ENCODE measurements at regions of chr3 and their contacts with region 1.

Region 1: GRCh38 chr3:79618883-79619282 is 148.9 kb downstream of the ROBO1 start:
- DNase-seq: peak; percentile 39 to 70
- H3K4me3 ChIP-seq: no peak overlapping the region
- H3K27ac ChIP-seq: peak overlapping the region; percentile 76
- H3K4me1 ChIP-seq: 0 out of 2 replicates have a peak, but pooled peaks cover 5% of the 10 kb centered on the region
- H3K27me3 ChIP-seq: no peaks in the 10 kb centered on the region
- CTCF ChIP-seq: no peak

Region 2: DNA sequence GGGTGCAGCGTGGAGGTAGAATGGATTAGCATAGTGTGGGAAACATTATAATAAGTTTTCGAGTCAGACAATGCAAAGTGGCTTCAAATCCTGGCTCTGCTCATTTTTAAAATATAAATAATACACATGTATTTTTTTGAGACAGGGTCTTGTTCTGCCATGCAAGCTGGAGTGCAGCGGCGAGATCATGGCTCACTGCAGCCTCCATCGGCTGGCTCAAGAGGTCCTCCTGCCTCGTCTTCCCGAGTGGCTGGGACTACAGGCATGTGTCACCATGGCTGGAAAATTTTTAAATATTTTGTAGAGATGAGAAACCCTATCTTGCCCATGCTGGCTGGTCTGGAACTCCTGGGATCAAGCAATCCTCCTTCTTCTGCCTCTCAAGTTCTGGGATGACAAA is 46.0 kb before region 1 on chr3:
- CTCF ChIA-PET with region 1: no interaction called
- POLR2A ChIA-PET with region 1: no interaction called
- intact Hi-C with region 1: no loop called
- DNase-seq: no peak
- H3K4me3 ChIP-seq: no peak overlapping the region
- H3K27ac ChIP-seq: no peak overlapping the region
- H3K4me1 ChIP-seq: no peaks in the 10 kb centered on the region
- H3K27me3 ChIP-seq: no peaks in the 10 kb centered on the region
- CTCF ChIP-seq: no peak

Region 3: DNA sequence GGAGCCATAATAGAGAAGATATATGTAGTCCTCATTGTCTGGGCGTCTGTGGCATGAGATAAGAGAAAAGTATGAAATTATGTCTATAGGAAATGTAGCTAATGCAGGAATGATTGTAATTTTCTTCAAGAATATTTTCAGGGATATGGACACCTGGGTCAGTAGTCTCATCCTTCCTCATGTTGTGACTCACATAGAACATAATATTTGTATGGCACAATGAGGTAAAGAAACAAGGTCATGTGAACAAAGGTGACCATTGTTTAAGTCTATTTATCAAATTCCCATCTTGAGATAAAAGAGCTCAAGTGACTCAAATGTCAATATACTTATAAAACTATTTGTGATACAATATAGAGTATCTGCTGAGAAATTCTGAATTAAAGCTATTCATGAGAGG is 494.4 kb after region 1 on chr3:
- CTCF ChIA-PET with region 1: interaction called, 18 read pairs
- POLR2A ChIA-PET with region 1: no interaction called
- intact Hi-C with region 1: no loop called
- DNase-seq: peak in 1 of 2 experiments; percentile 37
- H3K4me3 ChIP-seq: no peak overlapping the region
- H3K27ac ChIP-seq: no peak overlapping the region
- H3K4me1 ChIP-seq: no peaks in the 10 kb centered on the region
- H3K27me3 ChIP-seq: no peaks in the 10 kb centered on the region
- CTCF ChIP-seq: no peak